IMR-90 (cell line): ENCODE measurements at regions of chr1 and their contacts with region 1.

Region 1: GRCh38 chr1:3714284-3714741 is 37.9 kb upstream of the CCDC27 start:
- DNase-seq: no peak
- ATAC-seq: no peak
- H3K4me3 ChIP-seq: no peak overlapping the region
- H3K27ac ChIP-seq: no peak overlapping the region
- H3K4me1 ChIP-seq: no peaks in the 10 kb centered on the region
- H3K27me3 ChIP-seq: peaks cover 66% of the 10 kb centered on the region
- CTCF ChIP-seq: no peak
- POLR2A ChIP-seq: no peak
- RAD21 ChIP-seq: no peak

Region 2: GRCh38 chr1:3727042-3727824 is 12.9 kb after region 1 on chr1:
- CTCF ChIA-PET with region 1: interaction called, 10 read pairs
- POLR2A ChIA-PET with region 1: no interaction called
- dilution Hi-C with region 1: no loop called
- in situ Hi-C with region 1: no loop called
- intact Hi-C with region 1: no loop called
- DNase-seq: no peak
- ATAC-seq: peak; percentile 54; the same call in 1 of the 2 replicates
- H3K4me3 ChIP-seq: no peak overlapping the region
- H3K27ac ChIP-seq: no peak overlapping the region
- H3K4me1 ChIP-seq: no peaks in the 10 kb centered on the region
- H3K27me3 ChIP-seq: no peaks in the 10 kb centered on the region; the same call in 1 of the 2 replicates
- CTCF ChIP-seq: peak; percentile 38
- POLR2A ChIP-seq: no peak
- RAD21 ChIP-seq: peak; percentile 21; the same call in 1 of the 2 replicates

Region 3: GRCh38 chr1:3821004-3821403 is 106.7 kb after region 1 on chr1:
- CTCF ChIA-PET with region 1: no interaction called
- POLR2A ChIA-PET with region 1: no interaction called
- dilution Hi-C with region 1: no loop called
- in situ Hi-C with region 1: no loop called
- intact Hi-C with region 1: no loop called
- DNase-seq: no peak
- ATAC-seq: no peak
- H3K4me3 ChIP-seq: no peak overlapping the region
- H3K27ac ChIP-seq: no peak overlapping the region
- H3K4me1 ChIP-seq: no peaks in the 10 kb centered on the region
- H3K27me3 ChIP-seq: no peaks in the 10 kb centered on the region
- CTCF ChIP-seq: no peak
- POLR2A ChIP-seq: no peak
- RAD21 ChIP-seq: no peak

Region 4: GRCh38 chr1:4018466-4019146 is 304.3 kb after region 1 on chr1:
- CTCF ChIA-PET with region 1: no interaction called
- POLR2A ChIA-PET with region 1: no interaction called
- dilution Hi-C with region 1: no loop called
- in situ Hi-C with region 1: no loop called
- intact Hi-C with region 1: no loop called
- DNase-seq: no peak
- ATAC-seq: no peak
- H3K4me3 ChIP-seq: no peak overlapping the region
- H3K27ac ChIP-seq: no peak overlapping the region
- H3K4me1 ChIP-seq: no peaks in the 10 kb centered on the region
- H3K27me3 ChIP-seq: no peaks in the 10 kb centered on the region
- CTCF ChIP-seq: no peak
- POLR2A ChIP-seq: no peak
- RAD21 ChIP-seq: no peak